Activated T-helper 1 cell treated with anti-CD3 and anti-CD28 coated beads, Interleukin-12 subunit alpha, Interleukin-12 subunit beta, Interleukin-2, Interleukin-4 antibody, amounts not matched to agents 30 ng/mL and 10 ng/mL and 1 ng/mL, durations not matched to agents 14 hours and 24 hours and 36 hours (primary cell): ENCODE measurements at regions of chr12 and their contacts with region 1.

Region 1: DNA sequence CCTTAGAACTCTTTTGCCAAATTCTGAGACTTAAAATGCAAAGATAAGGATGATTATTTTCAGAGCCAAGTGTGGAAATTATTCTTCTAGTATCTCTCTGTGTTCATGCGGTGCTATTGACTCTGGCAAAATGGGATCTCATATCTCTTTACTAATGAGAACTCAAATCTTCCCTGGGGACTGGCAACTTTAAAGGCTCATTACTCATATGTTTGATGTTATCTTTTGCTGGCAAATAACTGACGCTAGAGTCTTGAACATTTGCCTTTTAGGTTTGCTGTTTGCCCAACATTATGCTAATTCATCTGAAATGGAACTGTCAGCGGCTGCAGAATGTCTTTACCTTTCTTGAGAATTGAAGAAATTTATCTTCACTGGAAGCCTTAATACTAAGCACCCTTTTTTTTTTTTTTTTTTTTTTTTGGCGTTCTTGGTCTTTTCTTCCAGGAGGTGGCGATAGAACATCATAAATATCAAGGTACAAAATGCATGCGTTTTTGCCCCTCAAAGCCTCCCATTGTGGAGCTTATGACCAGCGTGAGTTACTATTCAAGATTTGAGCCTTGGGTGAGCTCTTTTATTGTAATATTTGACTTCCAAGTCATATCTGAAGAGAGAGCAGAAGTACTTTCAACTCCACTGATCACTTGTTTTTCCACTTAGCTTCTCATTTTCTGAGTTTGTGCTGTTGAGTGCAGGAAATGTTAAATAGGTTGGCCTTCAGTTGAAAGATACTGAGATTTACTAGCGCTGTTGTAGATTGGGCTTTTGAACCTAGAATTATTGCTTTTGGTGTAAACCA is 86.6 kb downstream of the CAND1 start:
- DNase-seq: no peak
- H3K4me3 Mint-ChIP-seq: no peak overlapping the region
- H3K27ac Mint-ChIP-seq: no peak overlapping the region
- H3K4me1 Mint-ChIP-seq: peaks cover 23% of the 10 kb centered on the region
- H3K27me3 Mint-ChIP-seq: no peaks in the 10 kb centered on the region

Region 2: DNA sequence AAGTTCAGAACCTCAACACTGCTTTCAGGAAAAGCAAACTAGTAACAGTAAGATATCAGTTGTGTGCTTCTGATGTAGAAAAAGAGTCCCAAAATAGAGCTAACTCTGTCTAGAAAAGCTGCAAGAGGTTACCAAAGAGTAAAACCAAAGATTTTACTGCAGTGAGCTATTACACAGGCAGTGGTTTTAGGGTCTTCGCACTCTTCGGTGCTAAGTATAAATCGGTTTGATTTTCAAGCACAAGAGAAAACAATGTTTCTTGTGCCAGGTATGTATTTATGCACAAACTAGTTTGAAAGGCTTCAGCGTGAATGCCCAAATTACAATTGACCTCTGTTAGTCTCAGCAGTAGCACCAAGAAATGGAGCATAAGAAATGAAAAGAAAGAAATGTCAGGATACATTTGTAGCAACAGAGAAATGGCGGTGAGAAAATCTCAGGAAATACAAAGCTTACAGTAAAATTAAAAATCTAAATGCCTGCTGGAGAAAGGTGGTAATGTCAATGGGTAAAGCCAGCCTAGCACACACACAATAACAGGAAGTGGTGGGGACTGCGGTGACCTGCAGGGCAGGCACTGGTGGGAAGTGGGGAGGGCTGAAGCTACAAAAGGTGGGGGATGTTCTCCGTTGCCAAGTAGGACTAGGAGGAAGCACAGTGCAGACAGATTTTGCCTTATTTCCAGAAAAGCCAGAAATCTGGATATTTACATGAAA is 274.8 kb after region 1 on chr12:
- intact Hi-C with region 1: loop called (anchors 5 kb)
- DNase-seq: peak; percentile 81
- H3K4me3 Mint-ChIP-seq: peak overlapping the region; percentile 37
- H3K27ac Mint-ChIP-seq: peak overlapping the region; percentile 89
- H3K4me1 Mint-ChIP-seq: peaks cover 62% of the 10 kb centered on the region
- H3K27me3 Mint-ChIP-seq: no peaks in the 10 kb centered on the region

Region 3: GRCh38 chr12:67804168-67804567 is 448.4 kb after region 1 on chr12:
- intact Hi-C with region 1: loop called (anchors 10 kb)
- DNase-seq: peak; percentile 22
- H3K4me3 Mint-ChIP-seq: no peak overlapping the region
- H3K27ac Mint-ChIP-seq: no peak overlapping the region
- H3K4me1 Mint-ChIP-seq: peaks cover 13% of the 10 kb centered on the region
- H3K27me3 Mint-ChIP-seq: peaks cover 4% of the 10 kb centered on the region

Region 4: DNA sequence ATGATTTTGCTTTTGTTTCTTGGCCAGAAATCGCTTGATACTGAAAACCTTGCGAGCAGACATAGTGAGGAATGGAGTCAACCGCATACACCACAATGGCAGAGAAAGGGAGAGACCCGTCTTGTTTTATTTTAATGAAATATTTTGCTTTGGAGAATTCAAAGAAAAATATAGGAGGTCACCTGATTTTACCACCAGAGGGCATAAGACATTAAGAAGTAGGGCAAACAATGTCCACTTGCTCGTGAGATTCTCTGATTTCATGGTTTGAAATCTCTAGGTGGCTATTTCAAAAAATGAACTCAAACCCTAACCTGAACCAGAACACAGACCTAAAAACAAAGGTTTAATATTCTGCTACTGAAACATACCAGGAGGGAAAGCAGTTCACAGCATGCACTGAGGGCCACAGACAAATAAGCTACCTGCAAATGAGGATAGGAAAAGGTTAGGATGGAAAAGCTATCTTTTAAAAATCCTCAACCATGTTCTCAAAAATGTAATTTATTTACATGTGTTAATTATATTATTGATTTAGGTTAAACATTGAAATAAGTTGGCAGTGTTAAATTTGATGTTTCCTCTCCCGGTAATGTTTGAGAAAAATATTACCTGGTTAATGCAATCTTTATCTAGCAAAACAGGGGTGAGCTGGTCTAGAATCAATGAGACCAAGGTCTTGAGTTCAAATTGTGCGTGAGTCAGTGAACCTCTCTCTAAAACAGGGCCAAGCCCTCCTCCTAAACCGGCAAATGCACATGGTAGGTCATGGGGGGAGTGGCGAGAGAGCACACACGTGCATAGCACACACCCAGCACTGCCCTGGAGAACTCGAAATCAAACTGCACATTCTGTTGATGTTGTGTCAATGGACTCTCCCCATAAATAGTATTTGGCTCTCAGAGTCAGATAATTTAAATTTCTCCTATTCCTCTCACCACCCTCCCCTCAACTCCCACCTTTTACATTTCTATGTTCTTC is 646.0 kb after region 1 on chr12:
- intact Hi-C with region 1: loop called (anchors 1 kb)
- DNase-seq: no peak
- H3K4me3 Mint-ChIP-seq: no peak overlapping the region
- H3K27ac Mint-ChIP-seq: no peak overlapping the region
- H3K4me1 Mint-ChIP-seq: peaks cover 35% of the 10 kb centered on the region
- H3K27me3 Mint-ChIP-seq: no peaks in the 10 kb centered on the region

Region 5: DNA sequence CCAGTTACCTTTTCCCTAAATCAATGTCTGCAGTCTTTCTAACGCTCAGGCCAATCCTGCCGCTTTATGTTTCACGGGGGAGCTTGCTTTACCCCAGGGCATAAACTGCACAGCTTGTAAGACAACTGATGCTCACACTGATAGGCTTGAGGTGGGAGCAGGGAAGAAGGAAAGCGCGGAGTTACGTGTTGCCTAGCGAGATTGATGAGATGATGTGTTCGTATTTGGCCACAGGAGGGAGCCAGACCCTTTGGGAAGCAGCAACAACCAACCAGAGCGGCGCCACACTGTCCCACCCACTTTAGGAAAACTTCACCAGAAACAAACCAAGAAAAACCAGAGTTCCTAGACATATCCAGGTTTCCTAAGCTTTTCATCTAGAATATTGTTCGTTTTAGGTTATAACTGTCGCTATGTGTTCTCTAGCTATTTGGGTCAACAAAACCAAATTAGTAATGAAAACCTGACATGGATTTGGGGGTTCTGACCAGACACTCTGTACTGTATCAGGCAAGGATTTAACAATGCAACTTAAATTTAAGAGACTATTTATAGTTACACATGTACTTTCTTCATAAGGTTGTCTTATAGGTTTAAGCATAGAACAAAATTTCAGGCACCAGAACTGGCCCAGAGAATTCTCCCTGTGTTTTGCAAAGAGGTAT is 867.4 kb after region 1 on chr12:
- intact Hi-C with region 1: loop called (anchors 10 kb)
- DNase-seq: peak; percentile 68
- H3K4me3 Mint-ChIP-seq: peak overlapping the region; percentile 79
- H3K27ac Mint-ChIP-seq: peak overlapping the region; percentile 61
- H3K4me1 Mint-ChIP-seq: peaks cover 56% of the 10 kb centered on the region
- H3K27me3 Mint-ChIP-seq: no peaks in the 10 kb centered on the region